Esophagus muscularis mucosa (tissue), 4 donors: ENCODE measurements at regions of chr14 and their contacts with region 1.

Region 1: GRCh38 chr14:89915114-89915878 is 39.2 kb downstream of the EFCAB11 start:
- DNase-seq: no peak
- H3K4me3 ChIP-seq: peak overlapping the region in 2 of 4 donors; percentile 13 to 20
- H3K27ac ChIP-seq: peak overlapping the region in 1 of 4 donors; percentile 10
- H3K4me1 ChIP-seq: peaks cover 0 to 44% (median 39%) of the 10 kb centered on the region in 4 donors
- H3K27me3 ChIP-seq: no peaks in the 10 kb centered on the region
- CTCF ChIP-seq: peak; percentile 92 to 96 (median 96)
- EP300 ChIP-seq: no peak
- POLR2A ChIP-seq: no peak

Region 2: GRCh38 chr14:89027097-89027740 is 888.1 kb before region 1 on chr14:
- intact Hi-C with region 1: loop called (anchors 5 kb)
- DNase-seq: peak; percentile 72
- H3K4me3 ChIP-seq: peak overlapping the region; percentile 61 to 74 (median 62)
- H3K27ac ChIP-seq: no peak overlapping the region
- H3K4me1 ChIP-seq: peaks cover 12 to 16% (median 14%) of the 10 kb centered on the region in 4 donors
- H3K27me3 ChIP-seq: peaks cover 0 to 52% (median 0%) of the 10 kb centered on the region in 4 donors
- CTCF ChIP-seq: peak; percentile 79 to 99 (median 91)
- EP300 ChIP-seq: no peak
- POLR2A ChIP-seq: no peak

Region 3: DNA sequence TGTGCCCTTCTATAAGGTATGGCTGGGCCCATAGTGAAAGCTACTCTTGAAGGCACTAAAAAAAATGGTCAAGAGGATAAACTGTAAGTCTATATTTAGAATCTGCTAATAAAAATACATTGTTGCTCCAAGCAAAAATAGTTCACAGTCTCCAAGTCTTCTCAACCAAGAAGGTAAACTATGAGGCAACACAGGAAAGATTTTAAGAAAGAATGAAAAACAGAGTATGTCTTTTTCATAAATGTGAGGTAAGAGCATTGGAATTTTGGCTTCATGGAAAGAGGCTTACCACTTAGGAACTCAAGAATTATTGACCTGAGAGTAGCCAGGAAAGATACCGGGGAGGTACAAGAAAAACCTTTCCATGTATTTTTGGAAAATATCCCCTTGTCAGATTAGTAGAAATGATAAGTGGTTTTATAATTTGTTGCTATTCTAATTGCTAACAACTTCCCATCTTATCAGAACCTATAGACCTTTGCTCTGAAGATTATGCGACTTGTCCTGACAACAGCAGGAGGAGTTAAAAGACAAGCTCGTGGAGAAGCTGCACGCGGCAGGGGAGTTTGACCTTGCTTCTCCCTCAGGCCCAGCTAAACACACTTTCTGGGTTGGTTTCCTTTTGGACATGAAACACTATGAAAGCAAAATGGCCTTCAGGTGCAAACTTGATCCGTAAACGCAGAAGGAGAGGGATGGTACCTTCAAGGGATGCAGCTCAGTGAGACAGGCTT is 736.3 kb before region 1 on chr14:
- intact Hi-C with region 1: loop called (anchors 5 kb)
- DNase-seq: no peak
- H3K4me3 ChIP-seq: no peak overlapping the region
- H3K27ac ChIP-seq: peak overlapping the region in 2 of 4 donors; percentile 10 to 14
- H3K4me1 ChIP-seq: peaks cover 26 to 35% (median 30%) of the 10 kb centered on the region in 4 donors
- H3K27me3 ChIP-seq: no peaks in the 10 kb centered on the region
- CTCF ChIP-seq: no peak
- EP300 ChIP-seq: no peak
- POLR2A ChIP-seq: no peak

Region 4: GRCh38 chr14:89416002-89416995 is 499.0 kb before region 1 on chr14:
- intact Hi-C with region 1: loop called (anchors 5 kb)
- DNase-seq: peak; percentile 100
- H3K4me3 ChIP-seq: peak overlapping the region; percentile 78 to 94 (median 88)
- H3K27ac ChIP-seq: peak overlapping the region; percentile 96 to 99 (median 98)
- H3K4me1 ChIP-seq: peaks cover 27 to 56% (median 42%) of the 10 kb centered on the region in 4 donors
- H3K27me3 ChIP-seq: no peaks in the 10 kb centered on the region
- CTCF ChIP-seq: no peak
- EP300 ChIP-seq: no peak
- POLR2A ChIP-seq: no peak

Region 5: DNA sequence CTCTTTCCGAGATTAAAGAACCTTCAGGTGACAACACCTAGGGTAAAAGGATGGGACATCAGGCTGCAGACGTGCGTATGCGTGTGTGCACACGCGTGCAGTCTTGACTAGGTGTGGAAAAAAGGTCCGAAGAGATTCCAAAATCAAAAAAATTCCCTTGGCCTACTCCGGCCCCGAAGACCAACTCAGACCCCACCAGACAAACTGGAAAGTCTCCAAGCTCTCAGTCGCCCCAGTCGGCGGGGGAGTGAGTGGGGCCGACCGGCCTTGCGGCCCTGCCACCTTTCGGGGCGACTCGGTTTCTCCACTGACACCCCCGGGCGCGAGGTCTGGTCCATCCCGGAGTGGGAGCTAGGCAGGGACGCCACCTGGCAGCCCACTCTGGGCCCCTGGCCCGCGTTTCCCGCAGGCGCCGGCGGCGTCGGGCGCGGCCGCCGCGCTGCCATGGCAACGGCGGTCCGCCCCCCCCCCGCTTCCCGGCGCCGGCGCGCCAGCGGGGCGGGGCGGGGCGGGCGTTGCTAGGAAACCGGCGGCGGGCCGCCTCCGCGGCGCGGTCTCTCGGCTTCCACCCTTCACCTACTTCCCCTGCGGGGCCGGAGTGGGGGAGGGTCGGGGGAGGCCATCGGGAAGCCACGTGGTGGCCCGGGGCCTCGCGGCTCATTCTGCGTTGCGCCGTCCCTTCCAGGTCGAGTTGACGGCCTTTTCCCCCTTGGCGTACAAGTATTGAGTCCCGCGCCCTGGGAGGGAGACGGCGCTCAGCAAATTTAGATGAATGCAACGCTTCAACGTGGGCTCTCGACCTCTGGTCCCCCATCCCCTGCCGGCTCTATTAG is 213.9 kb before region 1 on chr14:
- intact Hi-C with region 1: loop called (anchors 5 kb)
- DNase-seq: peak; percentile 92
- H3K4me3 ChIP-seq: peak overlapping the region; percentile 52 to 65 (median 62)
- H3K27ac ChIP-seq: peak overlapping the region; percentile 74 to 85 (median 82)
- H3K4me1 ChIP-seq: peaks cover 17 to 32% (median 20%) of the 10 kb centered on the region in 4 donors
- H3K27me3 ChIP-seq: no peaks in the 10 kb centered on the region
- CTCF ChIP-seq: no peak
- EP300 ChIP-seq: peak; percentile 17
- POLR2A ChIP-seq: no peak

Region 6: GRCh38 chr14:89730687-89731086 is 184.6 kb before region 1 on chr14:
- intact Hi-C with region 1: no loop called
- DNase-seq: no peak
- H3K4me3 ChIP-seq: no peak overlapping the region
- H3K27ac ChIP-seq: no peak overlapping the region
- H3K4me1 ChIP-seq: no peaks in the 10 kb centered on the region
- H3K27me3 ChIP-seq: no peaks in the 10 kb centered on the region
- CTCF ChIP-seq: no peak
- EP300 ChIP-seq: no peak
- POLR2A ChIP-seq: no peak

Region 7: DNA sequence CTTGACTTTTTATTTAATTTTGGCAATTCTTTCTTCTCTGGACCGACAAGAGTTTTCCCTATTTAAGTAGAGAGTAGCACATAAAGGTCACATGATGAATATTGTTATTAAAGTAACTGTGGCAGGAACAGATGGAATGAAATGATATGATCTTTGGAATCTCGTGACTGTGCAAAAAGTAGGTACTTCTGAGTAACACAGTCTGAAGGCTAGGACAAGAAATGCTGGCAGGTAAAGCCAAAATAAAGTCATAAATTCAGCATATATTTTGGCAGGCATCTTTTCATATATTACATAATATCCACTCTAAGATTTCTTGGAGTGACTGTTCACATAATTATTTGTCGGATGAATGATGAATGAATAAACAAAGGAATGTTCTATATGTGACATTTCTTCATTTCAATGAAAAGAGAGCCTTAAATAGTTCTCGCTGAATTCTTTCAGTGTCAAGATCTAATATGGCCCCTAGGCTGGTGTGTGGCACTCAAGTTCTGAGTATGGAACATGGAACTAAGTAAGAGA is 82.1 kb before region 1 on chr14:
- intact Hi-C with region 1: no loop called
- DNase-seq: no peak
- H3K4me3 ChIP-seq: no peak overlapping the region
- H3K27ac ChIP-seq: no peak overlapping the region
- H3K4me1 ChIP-seq: peaks cover 0 to 15% (median 4%) of the 10 kb centered on the region in 4 donors
- H3K27me3 ChIP-seq: no peaks in the 10 kb centered on the region
- CTCF ChIP-seq: no peak
- EP300 ChIP-seq: no peak
- POLR2A ChIP-seq: no peak